Naive thymus-derived CD4-positive, alpha-beta T cell (primary cell): ENCODE measurements at regions of chr2 and their contacts with region 1.

Region 1: GRCh38 chr2:101704046-101704466 is 6.5 kb downstream of the MAP4K4 start:
- DNase-seq: peak in 7 of 9 donors; percentile 37 to 64 (median 57)
- ATAC-seq: peak; percentile 48
- H3K4me3 ChIP-seq: peak overlapping the region; percentile 50
- H3K4me3 Mint-ChIP-seq: peak overlapping the region in 7 of 10 donors; percentile 71 to 88 (median 86)
- H3K27ac ChIP-seq: peak overlapping the region; percentile 52
- H3K27ac Mint-ChIP-seq: peak overlapping the region in 4 of 9 donors; percentile 89 to 96 (median 93)
- H3K4me1 ChIP-seq: peaks cover 68 to 77% of the 10 kb centered on the region in 2 donors
- H3K4me1 Mint-ChIP-seq: peaks cover 0 to 83% (median 48%) of the 10 kb centered on the region in 7 donors
- H3K27me3 ChIP-seq: no peaks in the 10 kb centered on the region
- H3K27me3 Mint-ChIP-seq: no peaks in the 10 kb centered on the region

Region 2: GRCh38 chr2:101770726-101771125 is 66.7 kb after region 1 on chr2:
- CTCF ChIA-PET with region 1: interaction called, 6 read pairs
- POLR2A ChIA-PET with region 1: interaction called, 5 read pairs
- intact Hi-C with region 1: loop called in 1 of 2 experiments (anchors 2 kb)
- DNase-seq: no peak
- ATAC-seq: peak; percentile 48
- H3K4me3 ChIP-seq: no peak overlapping the region
- H3K4me3 Mint-ChIP-seq: peak overlapping the region in 8 of 10 donors; percentile 48 to 79 (median 73)
- H3K27ac ChIP-seq: no peak overlapping the region
- H3K27ac Mint-ChIP-seq: peak overlapping the region in 7 of 9 donors; percentile 14 to 90 (median 59)
- H3K4me1 ChIP-seq: peaks cover 20 to 79% of the 10 kb centered on the region in 2 donors
- H3K4me1 Mint-ChIP-seq: peaks cover 73 to 98% (median 95%) of the 10 kb centered on the region in 7 donors
- H3K27me3 ChIP-seq: no peaks in the 10 kb centered on the region
- H3K27me3 Mint-ChIP-seq: no peaks in the 10 kb centered on the region

Region 3: GRCh38 chr2:102251042-102251848 is 547.2 kb after region 1 on chr2:
- CTCF ChIA-PET with region 1: no interaction called
- POLR2A ChIA-PET with region 1: no interaction called
- intact Hi-C with region 1: loop called in 1 of 2 experiments (anchors 10 kb)
- DNase-seq: peak; percentile 28 to 63 (median 57)
- ATAC-seq: peak; percentile 90
- H3K4me3 ChIP-seq: peak overlapping the region; percentile 75
- H3K4me3 Mint-ChIP-seq: peak overlapping the region; percentile 86 to 99 (median 94)
- H3K27ac ChIP-seq: no peak overlapping the region
- H3K27ac Mint-ChIP-seq: peak overlapping the region in 7 of 9 donors; percentile 56 to 94 (median 78)
- H3K4me1 ChIP-seq: peaks cover 0 to 18% of the 10 kb centered on the region in 2 donors
- H3K4me1 Mint-ChIP-seq: peaks cover 7 to 44% (median 14%) of the 10 kb centered on the region in 7 donors
- H3K27me3 ChIP-seq: no peaks in the 10 kb centered on the region
- H3K27me3 Mint-ChIP-seq: peaks cover 0 to 5% (median 2%) of the 10 kb centered on the region in 5 donors